ENCODE measurements at regions of chr6 and their contacts with region 1.

Region 1: DNA sequence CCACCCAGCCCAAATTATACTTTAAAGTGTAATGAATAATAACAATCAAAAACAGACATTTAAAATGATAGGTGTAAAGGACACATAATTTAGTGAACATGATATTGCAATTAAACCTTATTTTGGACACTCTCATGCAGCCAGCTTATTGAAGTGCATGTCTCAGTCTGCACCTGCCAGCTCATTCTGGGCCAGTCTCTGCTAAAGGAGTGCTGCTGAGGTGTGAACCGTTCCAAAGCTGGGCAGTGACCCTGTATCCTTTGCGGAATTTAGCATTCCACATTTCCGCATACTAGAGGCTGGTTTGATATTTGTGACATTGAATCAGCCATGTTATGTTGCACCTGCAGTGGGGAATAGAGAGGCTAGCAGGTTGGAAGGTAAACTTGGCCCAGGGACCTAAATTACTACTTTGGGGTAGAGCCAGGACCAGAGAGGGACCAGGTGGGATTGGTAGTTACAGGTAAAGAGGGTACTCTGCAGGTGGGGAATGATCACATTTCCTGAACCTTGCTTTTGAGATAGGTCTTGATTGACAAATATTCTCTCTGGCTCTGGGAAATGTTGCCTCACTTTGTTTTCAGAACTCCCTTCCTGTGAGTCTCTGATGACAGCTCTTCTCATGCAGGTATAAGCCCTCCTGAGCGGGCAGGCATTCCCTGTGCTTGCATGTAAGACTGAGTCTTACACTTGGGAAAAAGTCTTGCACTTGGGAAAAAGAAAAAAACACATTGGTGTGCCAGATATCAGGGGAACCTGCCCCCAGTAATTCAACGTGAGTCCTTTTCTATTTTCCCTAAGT is 26.2 kb downstream of the TULP4 start:
- DNase-seq: peak; percentile 23
- H3K4me3 Mint-ChIP-seq: peak overlapping the region; percentile 57
- H3K27ac Mint-ChIP-seq: peak overlapping the region; percentile 86
- H3K4me1 Mint-ChIP-seq: peaks cover 74% of the 10 kb centered on the region
- H3K27me3 Mint-ChIP-seq: no peaks in the 10 kb centered on the region
- CTCF ChIP-seq: no peak

Region 2: GRCh38 chr6:158231551-158232315 is 106.8 kb before region 1 on chr6:
- CTCF ChIA-PET with region 1: interaction called, 3 read pairs
- intact Hi-C with region 1: loop called (anchors 5 kb)
- DNase-seq: peak; percentile 84
- H3K4me3 Mint-ChIP-seq: peak overlapping the region; percentile 88
- H3K27ac Mint-ChIP-seq: peak overlapping the region; percentile 47
- H3K4me1 Mint-ChIP-seq: peaks cover 15% of the 10 kb centered on the region
- H3K27me3 Mint-ChIP-seq: no peaks in the 10 kb centered on the region
- CTCF ChIP-seq: no peak

Region 3: GRCh38 chr6:158262755-158263154 is 75.8 kb before region 1 on chr6:
- CTCF ChIA-PET with region 1: interaction called, 12 read pairs
- intact Hi-C with region 1: no loop called
- DNase-seq: no peak
- H3K4me3 Mint-ChIP-seq: no peak overlapping the region
- H3K27ac Mint-ChIP-seq: no peak overlapping the region
- H3K4me1 Mint-ChIP-seq: no peaks in the 10 kb centered on the region
- H3K27me3 Mint-ChIP-seq: no peaks in the 10 kb centered on the region
- CTCF ChIP-seq: no peak

Region 4: GRCh38 chr6:158408552-158409130 is 70.1 kb after region 1 on chr6:
- CTCF ChIA-PET with region 1: no interaction called
- intact Hi-C with region 1: loop called (anchors 5 kb)
- DNase-seq: no peak
- H3K4me3 Mint-ChIP-seq: no peak overlapping the region
- H3K27ac Mint-ChIP-seq: no peak overlapping the region
- H3K4me1 Mint-ChIP-seq: peaks cover 71% of the 10 kb centered on the region
- H3K27me3 Mint-ChIP-seq: no peaks in the 10 kb centered on the region
- CTCF ChIP-seq: no peak

Measured in Calu3 (cell line).